Activated CD8-positive, alpha-beta T cell treated with anti-CD3 and anti-CD28 coated beads for 36 hours (primary cell): ENCODE measurements at regions of chr15 and their contacts with region 1.

Region 1: DNA sequence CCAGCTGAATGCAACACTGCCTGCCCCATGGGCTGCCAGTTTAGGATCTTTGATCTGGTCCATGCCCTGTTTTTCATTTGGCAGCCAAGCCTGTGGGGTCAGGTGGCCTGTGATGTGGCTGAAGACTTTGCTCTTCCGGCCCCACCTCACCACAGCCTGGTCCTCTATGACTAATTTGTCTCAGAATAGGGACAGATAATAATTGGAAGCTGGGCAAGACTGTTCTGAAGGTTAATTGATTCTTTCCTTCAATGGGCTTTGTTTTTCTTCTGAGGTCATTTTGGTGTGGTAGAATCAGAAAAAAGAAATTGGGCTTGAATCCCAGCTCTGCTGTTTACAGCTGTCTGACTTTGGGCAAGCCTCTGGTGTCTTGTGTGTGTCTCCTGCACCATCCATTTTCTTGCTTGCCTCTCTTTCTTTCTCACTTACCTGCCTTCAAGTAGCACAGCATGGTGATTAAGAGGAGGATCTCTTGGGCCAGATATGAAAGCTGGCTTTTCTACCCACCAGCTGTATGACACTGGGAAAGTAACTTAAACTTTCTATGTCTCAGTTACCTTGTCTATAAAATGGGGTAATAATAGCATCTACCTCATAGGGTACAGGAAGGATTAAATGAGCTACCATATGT is 24.2 kb downstream of the ABHD2 start:
- DNase-seq: no peak
- ATAC-seq: peak; percentile 45
- H3K4me3 Mint-ChIP-seq: no peak overlapping the region
- H3K27ac Mint-ChIP-seq: no peak overlapping the region
- H3K4me1 Mint-ChIP-seq: peaks cover 24% of the 10 kb centered on the region
- H3K27me3 Mint-ChIP-seq: no peaks in the 10 kb centered on the region
- CTCF ChIP-seq: no peak

Region 2: GRCh38 chr15:89101302-89102191 is 10.9 kb before region 1 on chr15:
- CTCF ChIA-PET with region 1: interaction called, 12 read pairs
- POLR2A ChIA-PET with region 1: interaction called, 3 read pairs
- intact Hi-C with region 1: no loop called
- DNase-seq: no peak
- ATAC-seq: peak; percentile 77
- H3K4me3 Mint-ChIP-seq: no peak overlapping the region
- H3K27ac Mint-ChIP-seq: peak overlapping the region; percentile 25
- H3K4me1 Mint-ChIP-seq: peaks cover 17% of the 10 kb centered on the region
- H3K27me3 Mint-ChIP-seq: no peaks in the 10 kb centered on the region
- CTCF ChIP-seq: no peak